MCF 10A (cell line): ENCODE measurements at regions of chr11 and their contacts with region 1.

Region 1: GRCh38 chr11:2151500-2152257 is 9.3 kb downstream of the INS start:
- DNase-seq: peak; percentile 78
- H3K4me3 Mint-ChIP-seq: no peak overlapping the region
- H3K27ac Mint-ChIP-seq: no peak overlapping the region
- H3K4me1 Mint-ChIP-seq: no peaks in the 10 kb centered on the region
- H3K27me3 Mint-ChIP-seq: peaks cover 43% of the 10 kb centered on the region
- CTCF ChIP-seq: peak; percentile 79

Region 2: DNA sequence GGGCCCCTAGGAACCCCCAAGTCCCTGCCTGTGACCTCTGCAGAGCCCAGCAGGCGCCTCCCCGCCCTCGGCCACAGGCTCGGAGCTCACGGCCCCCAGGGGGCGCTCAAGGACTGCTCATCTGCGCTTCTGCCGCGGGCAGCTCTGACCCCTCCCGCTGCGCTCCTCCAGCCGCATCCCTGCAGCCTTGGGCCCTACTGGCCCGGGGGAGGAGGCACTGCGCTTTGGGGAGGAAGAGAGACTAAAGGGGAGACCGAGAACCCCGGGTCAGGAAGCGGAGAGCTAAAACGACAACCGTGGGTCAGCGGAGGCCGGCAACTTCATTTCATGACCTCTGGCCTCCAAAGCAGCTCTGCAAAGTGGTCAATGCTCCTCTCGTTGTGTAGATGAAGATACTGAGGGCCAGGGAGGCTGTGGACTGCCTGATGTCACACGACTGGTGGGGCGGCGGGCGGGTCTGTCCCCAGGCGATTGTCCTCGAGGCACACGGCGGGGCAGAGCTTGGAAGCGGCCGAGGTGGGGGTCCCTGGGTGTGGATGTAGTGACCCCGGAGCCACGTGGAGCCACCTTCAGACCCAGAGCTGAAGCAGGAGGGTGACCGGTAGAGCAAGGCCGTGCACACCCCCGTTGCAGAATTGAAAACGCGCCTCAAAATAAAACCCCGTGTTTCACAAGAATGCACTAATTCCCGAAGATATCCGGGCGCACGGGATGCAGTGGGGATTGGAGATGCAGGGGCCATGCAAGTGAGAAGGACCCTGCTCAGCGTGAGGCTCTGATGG is 457.4 kb before region 1 on chr11:
- CTCF ChIA-PET with region 1: interaction called, 65 read pairs
- POLR2A ChIA-PET with region 1: no interaction called
- intact Hi-C with region 1: loop called (anchors 2 kb)
- DNase-seq: peak; percentile 69
- H3K4me3 Mint-ChIP-seq: peak overlapping the region; percentile 11
- H3K27ac Mint-ChIP-seq: no peak overlapping the region
- H3K4me1 Mint-ChIP-seq: peaks cover 11% of the 10 kb centered on the region
- H3K27me3 Mint-ChIP-seq: no peaks in the 10 kb centered on the region
- CTCF ChIP-seq: peak; percentile 91

Region 3: GRCh38 chr11:1876361-1877063 is 275.2 kb before region 1 on chr11:
- CTCF ChIA-PET with region 1: interaction called, 43 read pairs
- POLR2A ChIA-PET with region 1: no interaction called
- intact Hi-C with region 1: no loop called
- DNase-seq: peak; percentile 80
- H3K4me3 Mint-ChIP-seq: peak overlapping the region; percentile 73
- H3K27ac Mint-ChIP-seq: peak overlapping the region; percentile 83
- H3K4me1 Mint-ChIP-seq: peaks cover 29% of the 10 kb centered on the region
- H3K27me3 Mint-ChIP-seq: no peaks in the 10 kb centered on the region
- CTCF ChIP-seq: peak; percentile 62

Region 4: GRCh38 chr11:1954486-1954885 is 197.2 kb before region 1 on chr11:
- CTCF ChIA-PET with region 1: interaction called, 30 read pairs
- POLR2A ChIA-PET with region 1: interaction called, 3 read pairs
- intact Hi-C with region 1: no loop called
- DNase-seq: no peak
- H3K4me3 Mint-ChIP-seq: no peak overlapping the region
- H3K27ac Mint-ChIP-seq: no peak overlapping the region
- H3K4me1 Mint-ChIP-seq: no peaks in the 10 kb centered on the region
- H3K27me3 Mint-ChIP-seq: no peaks in the 10 kb centered on the region
- CTCF ChIP-seq: no peak

Region 5: DNA sequence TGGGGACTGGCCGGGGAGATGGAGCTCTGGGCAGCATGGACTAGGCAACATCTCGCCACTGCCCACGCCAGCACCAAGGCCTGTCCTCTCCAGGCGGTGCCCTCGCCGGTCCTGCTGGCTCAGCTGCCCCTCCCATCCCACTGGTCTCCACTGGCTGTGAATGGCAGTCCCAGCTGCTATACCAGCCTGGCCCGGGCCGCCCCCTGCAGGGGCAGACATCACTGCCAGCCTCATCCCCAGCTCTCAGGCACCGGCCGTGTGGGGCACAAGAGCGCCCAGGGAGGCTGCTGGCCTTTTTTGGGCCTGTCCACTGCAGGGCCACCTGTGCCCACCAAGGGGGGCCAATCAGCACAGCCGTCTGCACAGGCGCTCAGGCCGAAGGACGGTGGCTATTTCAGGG is 124.0 kb before region 1 on chr11:
- CTCF ChIA-PET with region 1: interaction called, 541 read pairs
- POLR2A ChIA-PET with region 1: interaction called, 3 read pairs
- intact Hi-C with region 1: no loop called
- DNase-seq: no peak
- H3K4me3 Mint-ChIP-seq: no peak overlapping the region
- H3K27ac Mint-ChIP-seq: no peak overlapping the region
- H3K4me1 Mint-ChIP-seq: no peaks in the 10 kb centered on the region
- H3K27me3 Mint-ChIP-seq: no peaks in the 10 kb centered on the region
- CTCF ChIP-seq: no peak

Region 6: GRCh38 chr11:2099516-2100340 is 52.0 kb before region 1 on chr11:
- CTCF ChIA-PET with region 1: interaction called, 23 read pairs
- POLR2A ChIA-PET with region 1: no interaction called
- intact Hi-C with region 1: no loop called
- DNase-seq: peak; percentile 81
- H3K4me3 Mint-ChIP-seq: no peak overlapping the region
- H3K27ac Mint-ChIP-seq: no peak overlapping the region
- H3K4me1 Mint-ChIP-seq: peaks cover 16% of the 10 kb centered on the region
- H3K27me3 Mint-ChIP-seq: peaks cover 20% of the 10 kb centered on the region
- CTCF ChIP-seq: no peak

Region 7: DNA sequence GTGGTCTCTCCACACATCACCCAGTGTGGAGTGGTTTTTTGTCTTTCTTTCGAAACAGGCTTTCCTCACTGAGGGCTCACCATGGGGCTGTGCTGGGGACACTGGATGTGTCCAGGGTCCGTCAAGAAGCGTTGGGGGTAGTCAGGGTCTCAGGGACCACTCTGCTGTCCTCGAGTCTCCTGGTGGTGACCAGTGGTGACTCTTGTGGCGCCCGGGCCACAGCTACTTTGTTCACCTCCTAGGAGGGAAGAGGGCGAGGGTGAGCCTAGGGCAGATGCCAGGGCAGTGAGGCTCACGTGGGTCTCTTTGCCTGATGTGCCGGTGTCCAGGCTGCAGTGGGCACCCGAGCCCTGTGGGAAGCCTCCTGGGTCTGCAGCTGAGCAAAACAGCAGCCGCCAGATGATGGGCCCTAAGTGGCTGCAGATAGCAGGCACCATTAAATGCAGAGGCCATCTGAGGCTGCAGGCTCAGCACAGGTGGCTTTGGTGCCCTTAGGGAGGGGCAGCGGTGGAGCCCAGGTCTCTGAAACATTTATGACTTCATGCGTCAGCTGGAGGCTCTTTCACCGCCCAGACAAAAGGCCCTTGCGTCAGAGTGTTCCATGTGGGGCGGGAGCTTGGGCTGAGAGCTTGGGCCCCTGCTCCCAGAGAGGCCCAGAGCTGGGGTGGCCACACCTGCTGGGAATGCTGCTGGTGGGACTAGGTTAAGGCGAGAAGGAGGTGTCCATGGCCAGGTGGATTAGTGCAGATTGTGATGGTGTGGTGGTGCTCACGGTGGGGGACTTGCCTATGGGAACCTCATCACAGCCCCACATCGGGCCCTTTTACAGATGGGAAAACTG is 322.6 kb after region 1 on chr11:
- CTCF ChIA-PET with region 1: no interaction called
- POLR2A ChIA-PET with region 1: no interaction called
- intact Hi-C with region 1: no loop called
- DNase-seq: no peak
- H3K4me3 Mint-ChIP-seq: no peak overlapping the region
- H3K27ac Mint-ChIP-seq: no peak overlapping the region
- H3K4me1 Mint-ChIP-seq: no peaks in the 10 kb centered on the region
- H3K27me3 Mint-ChIP-seq: peaks cover 24% of the 10 kb centered on the region
- CTCF ChIP-seq: no peak